Left lung (tissue), 14 donors: ENCODE measurements at regions of chr6 and their contacts with region 1.

Region 1: DNA sequence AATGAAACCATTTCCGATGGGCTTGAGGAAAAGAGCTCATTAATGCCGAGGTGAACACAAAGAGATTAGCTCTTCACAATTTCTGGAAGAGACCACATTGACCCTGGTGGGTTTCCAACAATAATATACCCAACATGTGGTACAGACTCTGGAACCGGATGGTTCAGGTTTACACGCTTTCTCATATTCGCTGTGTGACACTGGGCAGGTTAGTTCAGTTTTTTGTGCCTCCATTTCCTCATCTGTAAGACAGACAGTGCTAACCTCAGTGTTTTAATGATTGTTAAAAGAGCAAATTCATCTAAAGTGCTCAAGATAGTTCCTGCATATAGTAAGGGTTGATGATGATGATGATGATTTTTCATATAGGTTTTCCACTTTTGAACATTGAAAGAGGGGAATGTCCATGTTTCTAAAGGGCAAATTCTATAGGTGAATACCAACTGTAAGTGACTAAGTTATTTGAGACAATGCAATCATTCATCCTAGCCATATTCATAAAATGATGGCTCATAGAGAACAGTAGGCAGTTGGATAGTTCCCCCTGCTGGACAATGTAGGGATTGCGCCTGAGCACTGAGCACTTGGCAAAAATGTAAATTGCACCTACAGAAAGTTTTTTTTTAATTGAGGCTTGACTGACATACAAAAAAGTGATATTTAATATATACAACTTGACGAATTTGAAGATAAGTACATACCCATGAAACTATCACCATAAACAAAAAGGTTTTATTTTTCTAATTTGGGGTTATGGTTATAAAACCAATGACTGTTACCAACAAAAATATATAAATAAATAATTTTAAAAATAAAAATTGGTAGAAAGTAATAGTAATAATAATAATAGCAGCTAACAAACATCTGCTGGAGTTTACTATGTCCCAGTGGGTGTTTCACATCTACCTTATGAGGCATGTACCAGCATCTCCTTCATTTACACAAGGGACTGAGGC is 2.1 kb upstream of the PERP start:
- DNase-seq: peak in 2 of 4 donors; percentile 44 to 72
- ATAC-seq: peak; percentile 45
- H3K4me3 ChIP-seq: no peak overlapping the region
- H3K27ac ChIP-seq: no peak overlapping the region
- H3K4me1 ChIP-seq: peaks cover 0 to 13% of the 10 kb centered on the region in 2 donors
- H3K27me3 ChIP-seq: peaks cover 29 to 50% of the 10 kb centered on the region in 2 donors
- CTCF ChIP-seq: peak; percentile 94 to 96

Region 2: DNA sequence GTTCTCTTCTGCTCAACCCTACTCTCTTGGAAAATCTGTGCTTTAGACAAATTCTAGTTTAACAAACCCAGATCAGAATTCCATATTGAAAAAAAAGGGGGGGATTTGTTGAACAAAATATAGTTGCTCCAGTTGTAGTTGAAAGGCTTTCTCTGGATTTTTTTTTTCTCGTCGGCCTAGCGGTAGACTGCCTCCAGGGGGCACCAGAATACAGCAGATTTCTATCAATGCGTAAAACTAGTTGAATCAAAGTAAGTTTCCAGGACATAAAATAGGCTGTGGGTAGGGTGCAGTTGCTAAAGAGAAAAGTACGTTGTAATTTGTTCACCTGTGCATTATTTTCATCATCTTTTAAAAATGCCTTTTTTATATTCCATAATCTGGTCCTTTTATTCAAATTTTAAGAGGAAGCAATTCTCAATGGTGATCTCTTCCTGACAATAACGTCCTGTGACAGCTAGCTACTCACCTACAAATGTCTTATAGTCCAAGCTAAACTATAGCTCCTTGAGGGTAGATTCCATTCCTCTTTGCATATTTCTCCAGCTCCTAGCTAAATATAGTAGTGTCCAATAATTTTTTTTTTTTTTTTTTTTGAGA is 107.5 kb before region 1 on chr6:
- intact Hi-C with region 1: loop called in 1 of 2 experiments (anchors 5 kb)
- DNase-seq: peak in 2 of 4 donors; percentile 42 to 60
- ATAC-seq: peak; percentile 90
- H3K4me3 ChIP-seq: no peak overlapping the region
- H3K27ac ChIP-seq: no peak overlapping the region
- H3K4me1 ChIP-seq: peaks cover 0 to 5% of the 10 kb centered on the region in 2 donors
- H3K27me3 ChIP-seq: no peaks in the 10 kb centered on the region
- CTCF ChIP-seq: peak; percentile 69 to 83